ENCODE measurements at regions of chr10 and their contacts with region 1.

Region 1: DNA sequence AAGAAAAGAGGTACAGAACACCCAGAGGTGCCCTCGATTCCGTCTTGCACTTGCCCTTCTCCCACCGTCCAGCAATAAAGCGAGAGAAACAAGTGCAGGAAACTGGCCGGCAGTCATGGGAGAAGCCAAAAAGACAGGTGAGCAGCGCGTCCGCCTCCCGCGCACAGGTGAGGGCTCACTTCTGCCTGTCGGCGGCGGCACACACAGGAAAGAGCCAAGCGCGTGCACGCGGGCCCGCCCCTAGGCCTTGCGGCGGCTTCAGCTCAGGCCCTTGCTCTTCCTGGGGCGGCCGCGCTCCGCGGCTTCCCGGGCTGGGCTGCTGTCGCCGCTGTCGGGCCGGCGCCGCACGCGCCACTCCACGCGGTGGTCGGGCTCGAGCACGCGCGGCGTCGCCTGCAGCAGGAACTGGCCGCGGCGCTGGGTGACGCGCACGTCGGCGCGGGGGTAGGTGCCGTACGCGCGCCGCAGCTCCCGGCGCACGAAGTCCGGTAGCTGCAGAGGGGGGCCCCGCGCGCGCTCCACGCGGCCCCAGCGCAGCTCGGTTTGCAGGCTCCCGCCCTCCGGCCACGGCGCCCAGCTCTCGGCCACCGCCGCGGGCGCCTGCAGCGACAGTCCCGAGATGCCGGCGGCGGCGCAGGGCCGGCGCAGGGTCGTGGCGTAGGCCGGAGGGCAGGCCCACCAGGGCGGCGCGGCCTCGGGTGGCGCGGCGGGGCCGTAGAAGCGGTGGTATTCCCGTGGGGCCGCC is 977 bp downstream of the C10orf95 start:
- DNase-seq: peak; percentile 92
- H3K4me3 Mint-ChIP-seq: peak overlapping the region; percentile 95
- H3K27ac Mint-ChIP-seq: peak overlapping the region; percentile 92
- H3K4me1 Mint-ChIP-seq: peaks cover 43% of the 10 kb centered on the region
- H3K27me3 Mint-ChIP-seq: no peaks in the 10 kb centered on the region

Region 2: GRCh38 chr10:102368072-102368471 is 82.3 kb before region 1 on chr10:
- CTCF ChIA-PET with region 1: no interaction called
- POLR2A ChIA-PET with region 1: no interaction called
- DNase-seq: no peak
- H3K4me3 Mint-ChIP-seq: no peak overlapping the region
- H3K27ac Mint-ChIP-seq: no peak overlapping the region
- H3K4me1 Mint-ChIP-seq: no peaks in the 10 kb centered on the region
- H3K27me3 Mint-ChIP-seq: no peaks in the 10 kb centered on the region

Region 3: GRCh38 chr10:102432162-102432950 is 18.0 kb before region 1 on chr10 and contains the start of gene CUEDC2:
- CTCF ChIA-PET with region 1: interaction called, 20 read pairs
- POLR2A ChIA-PET with region 1: interaction called, 70 read pairs
- DNase-seq: peak; percentile 98
- H3K4me3 Mint-ChIP-seq: peak within 1 kb of the TSS; percentile 88
- H3K27ac Mint-ChIP-seq: peak within 1 kb of the TSS; percentile 82
- H3K4me1 Mint-ChIP-seq: peaks cover 55% of the 10 kb centered on the region
- H3K27me3 Mint-ChIP-seq: no peaks in the 10 kb centered on the region
- total RNA-seq, gene CUEDC2: 60.9 to 64.5 TPM

Region 4: DNA sequence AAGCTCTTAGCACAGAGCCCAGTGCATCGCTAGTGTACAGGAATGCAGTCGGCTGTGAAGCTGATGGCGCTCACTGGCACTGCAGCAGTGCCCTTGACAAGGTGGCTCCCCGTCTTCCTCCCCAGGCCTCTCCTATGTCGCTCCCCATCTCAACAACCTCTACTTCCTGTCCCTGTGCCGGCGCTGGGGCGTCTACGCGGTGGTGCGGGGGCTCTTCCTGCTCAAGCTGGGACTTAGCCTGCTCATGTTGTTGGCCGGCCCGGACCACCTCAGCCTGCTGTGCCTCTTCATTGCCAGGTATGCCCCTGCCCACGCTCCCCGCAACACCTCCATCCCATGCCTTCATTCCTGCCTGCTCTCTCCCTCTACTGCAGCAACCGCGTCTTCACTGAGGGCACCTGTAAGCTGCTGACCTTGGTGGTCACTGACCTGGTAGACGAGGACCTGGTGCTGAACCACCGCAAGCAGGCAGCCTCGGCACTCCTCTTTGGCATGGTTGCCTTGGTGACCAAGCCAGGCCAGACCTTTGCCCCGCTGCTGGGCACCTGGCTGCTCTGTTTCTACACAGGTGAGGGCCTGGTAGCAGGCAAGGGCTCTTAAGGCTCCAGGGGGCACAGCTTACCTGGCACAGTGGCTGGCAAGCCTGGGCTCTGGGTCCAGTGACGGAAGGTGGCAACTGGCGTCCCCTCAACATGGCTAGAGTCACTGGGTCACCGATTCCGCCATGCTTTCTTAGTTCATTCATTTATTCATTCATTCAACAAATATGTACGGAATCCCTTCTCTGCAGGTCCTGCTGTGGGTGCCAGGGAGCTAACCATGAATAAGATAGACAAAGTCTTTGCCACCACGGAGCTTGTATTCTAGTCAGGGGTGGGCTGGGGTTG is 23.3 kb after region 1 on chr10:
- CTCF ChIA-PET with region 1: interaction called, 8 read pairs
- POLR2A ChIA-PET with region 1: interaction called, 10 read pairs
- DNase-seq: peak; percentile 26
- H3K4me3 Mint-ChIP-seq: no peak overlapping the region
- H3K27ac Mint-ChIP-seq: peak overlapping the region; percentile 56
- H3K4me1 Mint-ChIP-seq: peaks cover 16% of the 10 kb centered on the region
- H3K27me3 Mint-ChIP-seq: no peaks in the 10 kb centered on the region

Region 5: DNA sequence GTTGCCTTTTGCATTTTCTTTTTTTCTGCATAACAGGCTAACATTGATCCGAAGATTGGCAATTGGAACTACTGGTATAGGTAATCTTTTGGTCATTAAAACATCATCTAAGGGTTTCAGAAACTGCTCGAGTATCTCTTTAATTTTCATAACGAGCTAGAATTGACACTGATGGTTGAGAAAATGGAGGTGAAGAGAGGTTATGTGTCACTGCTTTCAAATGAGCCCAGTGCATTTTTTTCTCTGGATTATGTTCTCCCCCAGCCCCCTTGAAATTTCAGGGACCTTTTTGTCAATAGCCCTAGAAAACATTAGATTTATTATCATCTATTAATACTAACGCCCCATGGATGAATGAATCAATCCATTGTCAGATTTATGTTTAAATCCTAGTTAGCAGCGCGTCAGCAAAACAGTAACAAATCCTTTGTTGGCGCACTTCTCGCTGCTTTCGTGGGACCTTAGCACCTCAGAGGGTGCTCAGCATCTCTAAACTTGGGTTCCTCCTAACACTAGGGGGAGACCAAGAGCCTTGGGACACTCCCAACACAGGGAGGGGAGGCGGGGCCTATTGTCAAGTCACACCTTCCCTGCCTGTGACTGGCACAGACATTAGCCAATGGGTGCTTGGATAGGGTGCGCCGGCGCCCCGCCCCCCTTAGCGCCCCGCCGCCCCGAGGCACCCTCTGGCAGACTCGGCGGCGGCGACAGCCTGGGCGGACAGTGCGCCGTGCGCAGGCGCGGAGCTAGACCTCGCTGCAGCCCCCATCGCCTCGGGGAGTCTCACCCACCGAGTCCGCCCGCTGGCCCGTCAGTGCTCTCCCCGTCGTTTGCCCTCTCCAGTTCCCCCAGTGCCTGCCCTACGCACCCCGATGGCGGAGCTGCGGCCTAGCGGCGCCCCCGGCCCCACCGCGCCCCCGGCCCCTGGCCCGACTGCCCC is 53.2 kb after region 1 on chr10 and contains the start of gene SUFU:
- CTCF ChIA-PET with region 1: interaction called, 6 read pairs
- POLR2A ChIA-PET with region 1: interaction called, 32 read pairs
- DNase-seq: peak; percentile 99
- H3K4me3 Mint-ChIP-seq: no peak within 1 kb of the TSS
- H3K27ac Mint-ChIP-seq: peak within 1 kb of the TSS; percentile 73
- H3K4me1 Mint-ChIP-seq: peaks cover 41% of the 10 kb centered on the region
- H3K27me3 Mint-ChIP-seq: no peaks in the 10 kb centered on the region
- total RNA-seq, gene SUFU: 18.0 to 19.6 TPM

Region 6: GRCh38 chr10:102523250-102524029 is 73.1 kb after region 1 on chr10:
- CTCF ChIA-PET with region 1: no interaction called
- POLR2A ChIA-PET with region 1: no interaction called
- DNase-seq: no peak
- H3K4me3 Mint-ChIP-seq: no peak overlapping the region
- H3K27ac Mint-ChIP-seq: no peak overlapping the region
- H3K4me1 Mint-ChIP-seq: peaks cover 5% of the 10 kb centered on the region
- H3K27me3 Mint-ChIP-seq: no peaks in the 10 kb centered on the region

Measured in activated CD4-positive, alpha-beta memory T cell treated with anti-CD3 and anti-CD28 coated beads, Interleukin-2, amount 10 ng/mL, durations not matched to agents 7 days and 5 days (primary cell).